Left ventricle myocardium inferior (tissue), 1 donor: ENCODE measurements at regions of chr11 and their contacts with region 1.

Region 1: DNA sequence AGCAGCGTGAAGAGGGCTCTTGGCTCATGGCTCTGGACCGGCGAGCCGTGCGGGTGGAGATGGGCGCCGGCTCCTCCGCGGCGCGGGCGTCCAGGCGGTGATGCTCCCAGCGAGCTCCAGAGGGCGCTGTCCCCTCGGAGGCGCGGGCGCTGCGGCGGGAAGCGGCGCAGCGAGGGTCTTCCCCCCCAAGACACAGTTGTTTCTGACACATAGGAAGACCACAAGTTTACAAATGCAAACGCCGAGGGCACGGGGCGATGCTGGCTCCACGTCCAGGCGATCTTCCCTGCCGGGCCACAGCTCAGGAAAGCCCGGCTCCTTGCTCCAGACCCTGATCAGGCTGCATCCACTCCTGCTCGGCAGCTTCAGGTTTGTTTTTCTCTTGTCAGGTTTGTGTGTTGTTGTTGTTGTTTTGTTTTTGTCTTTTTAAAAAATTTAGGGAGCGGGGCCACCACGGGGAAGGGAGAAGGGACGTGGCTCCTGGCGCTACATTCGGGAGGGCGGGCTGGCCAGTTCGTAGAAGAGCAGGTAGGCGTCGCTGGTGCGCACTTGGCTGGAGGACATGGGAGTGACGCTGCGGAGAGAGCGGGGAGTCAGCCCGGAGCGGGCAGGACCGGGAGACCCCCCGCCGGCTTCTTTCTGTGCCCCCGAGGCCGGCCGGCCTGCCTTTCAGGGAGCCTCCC is 10.0 kb upstream of the MFRP start:
- DNase-seq: peak; percentile 83
- H3K4me3 ChIP-seq: peak overlapping the region; percentile 68
- H3K27ac ChIP-seq: peak overlapping the region; percentile 95
- H3K4me1 ChIP-seq: peaks cover 87% of the 10 kb centered on the region
- H3K27me3 ChIP-seq: no peaks in the 10 kb centered on the region
- CTCF ChIP-seq: peak; percentile 89

Region 2: GRCh38 chr11:119018074-119018938 is 338.2 kb before region 1 on chr11 and contains the starts of genes RPS25 and TRAPPC4:
- intact Hi-C with region 1: no loop called
- DNase-seq: peak; percentile 95
- H3K4me3 ChIP-seq: peak within 1 kb of the TSS; percentile 79
- H3K27ac ChIP-seq: peak within 1 kb of the TSS; percentile 97
- H3K4me1 ChIP-seq: peaks cover 64% of the 10 kb centered on the region
- H3K27me3 ChIP-seq: no peaks in the 10 kb centered on the region
- CTCF ChIP-seq: no peak
- total RNA-seq, gene RPS25: 767 TPM
- total RNA-seq, gene TRAPPC4: 32.7 TPM

Region 3: GRCh38 chr11:119044708-119045107 is 311.8 kb before region 1 on chr11:
- intact Hi-C with region 1: no loop called
- DNase-seq: no peak
- H3K4me3 ChIP-seq: no peak overlapping the region
- H3K27ac ChIP-seq: no peak overlapping the region
- H3K4me1 ChIP-seq: no peaks in the 10 kb centered on the region
- H3K27me3 ChIP-seq: no peaks in the 10 kb centered on the region
- CTCF ChIP-seq: no peak

Region 4: DNA sequence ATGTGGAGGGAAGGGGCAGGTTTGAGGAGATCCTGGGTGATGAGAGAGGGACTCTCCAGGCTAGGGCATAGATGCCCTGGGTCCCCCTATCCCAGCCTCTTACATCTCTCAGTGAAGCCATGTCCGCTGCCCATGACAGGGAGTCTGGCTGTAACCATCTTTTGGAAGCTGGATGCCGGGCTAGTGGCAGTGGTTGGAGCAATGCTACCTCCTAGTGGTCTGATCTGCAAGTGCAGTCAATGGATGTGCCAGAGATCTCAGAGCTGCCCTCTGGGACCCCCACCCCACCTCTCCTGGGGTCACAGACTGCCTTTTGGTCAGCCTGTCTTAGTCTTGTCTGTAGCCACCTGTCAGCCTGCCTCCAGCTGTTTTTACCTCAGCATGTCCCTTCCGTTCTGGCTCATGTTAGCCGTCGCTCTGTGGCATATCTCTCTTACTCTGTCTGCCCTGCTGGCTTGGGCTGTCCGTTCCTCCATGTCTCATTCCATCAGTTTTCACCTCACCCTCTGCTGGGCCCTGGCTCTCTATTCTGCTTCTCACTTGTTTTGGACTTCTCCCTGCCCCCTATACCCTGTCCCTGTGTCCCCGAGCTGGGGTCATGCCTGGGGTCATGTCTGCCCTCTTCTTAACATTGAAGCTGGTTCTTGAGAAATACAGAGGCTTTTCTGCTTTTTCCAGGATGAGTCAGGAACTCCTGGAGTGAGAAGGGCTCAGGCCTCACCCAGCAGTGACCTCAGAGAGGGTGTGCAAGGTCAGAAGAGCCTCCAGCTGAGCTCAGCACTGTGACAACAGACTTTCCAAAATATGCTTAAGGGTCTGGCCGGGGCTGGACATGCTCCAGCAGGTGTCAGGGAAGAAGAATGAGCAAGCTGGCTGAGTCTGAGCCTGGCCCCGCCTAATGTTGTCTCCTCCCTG is 118.4 kb after region 1 on chr11:
- intact Hi-C with region 1: loop called (anchors 10 kb)
- DNase-seq: peak; percentile 46
- H3K4me3 ChIP-seq: no peak overlapping the region
- H3K27ac ChIP-seq: no peak overlapping the region
- H3K4me1 ChIP-seq: no peaks in the 10 kb centered on the region
- H3K27me3 ChIP-seq: peaks cover 23% of the 10 kb centered on the region
- CTCF ChIP-seq: peak; percentile 87

Region 5: GRCh38 chr11:120040151-120040840 is 683.8 kb after region 1 on chr11:
- intact Hi-C with region 1: no loop called
- DNase-seq: no peak
- H3K4me3 ChIP-seq: no peak overlapping the region
- H3K27ac ChIP-seq: no peak overlapping the region
- H3K4me1 ChIP-seq: no peaks in the 10 kb centered on the region
- H3K27me3 ChIP-seq: peaks cover 27% of the 10 kb centered on the region
- CTCF ChIP-seq: no peak

Region 6: DNA sequence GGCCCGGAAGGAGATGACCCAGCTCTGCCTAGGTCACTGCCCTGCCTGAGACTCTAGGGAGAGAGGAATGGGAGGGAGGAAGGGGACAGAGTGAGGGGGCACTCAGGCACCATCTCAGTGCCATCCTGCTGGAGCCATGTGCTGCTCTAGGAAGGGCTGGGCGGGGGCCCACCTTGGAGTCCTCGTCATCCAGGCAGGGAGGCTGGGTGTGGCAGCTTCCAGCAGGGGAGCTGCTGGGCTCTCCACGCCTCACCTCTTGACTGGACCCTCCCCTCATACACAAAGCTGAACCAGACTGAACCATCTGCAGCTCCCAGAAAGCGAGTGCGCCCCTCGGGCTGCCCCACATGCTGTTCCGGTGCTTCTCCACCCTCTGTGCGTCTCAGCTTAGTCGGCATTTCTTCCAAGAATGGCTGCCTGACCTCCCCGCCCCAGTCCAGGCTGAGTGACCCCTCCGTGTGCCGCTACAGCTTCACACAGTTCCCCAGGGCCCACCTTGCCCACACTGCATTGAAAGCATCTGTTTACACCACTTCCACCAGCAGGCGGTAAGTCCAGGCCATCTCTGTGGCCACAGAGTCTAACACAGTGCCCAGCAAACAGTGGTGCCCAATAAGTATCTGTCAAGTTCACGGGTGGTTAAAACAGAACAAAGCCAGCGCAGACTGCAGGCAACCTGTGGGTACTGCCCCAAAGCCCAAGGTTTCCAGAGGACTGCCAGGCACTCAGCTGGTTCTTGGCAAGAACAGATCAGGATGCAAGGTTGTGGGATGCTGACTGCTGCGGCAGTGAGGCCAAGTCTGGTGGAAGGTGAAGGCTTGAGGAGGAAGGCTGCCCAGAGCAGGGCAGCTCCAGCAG is 790.8 kb after region 1 on chr11:
- intact Hi-C with region 1: no loop called
- DNase-seq: no peak
- H3K4me3 ChIP-seq: no peak overlapping the region
- H3K27ac ChIP-seq: no peak overlapping the region
- H3K4me1 ChIP-seq: no peaks in the 10 kb centered on the region
- H3K27me3 ChIP-seq: peaks cover 93% of the 10 kb centered on the region
- CTCF ChIP-seq: no peak